ENCODE measurements at regions of chr18 and their contacts with region 1.

Region 1: DNA sequence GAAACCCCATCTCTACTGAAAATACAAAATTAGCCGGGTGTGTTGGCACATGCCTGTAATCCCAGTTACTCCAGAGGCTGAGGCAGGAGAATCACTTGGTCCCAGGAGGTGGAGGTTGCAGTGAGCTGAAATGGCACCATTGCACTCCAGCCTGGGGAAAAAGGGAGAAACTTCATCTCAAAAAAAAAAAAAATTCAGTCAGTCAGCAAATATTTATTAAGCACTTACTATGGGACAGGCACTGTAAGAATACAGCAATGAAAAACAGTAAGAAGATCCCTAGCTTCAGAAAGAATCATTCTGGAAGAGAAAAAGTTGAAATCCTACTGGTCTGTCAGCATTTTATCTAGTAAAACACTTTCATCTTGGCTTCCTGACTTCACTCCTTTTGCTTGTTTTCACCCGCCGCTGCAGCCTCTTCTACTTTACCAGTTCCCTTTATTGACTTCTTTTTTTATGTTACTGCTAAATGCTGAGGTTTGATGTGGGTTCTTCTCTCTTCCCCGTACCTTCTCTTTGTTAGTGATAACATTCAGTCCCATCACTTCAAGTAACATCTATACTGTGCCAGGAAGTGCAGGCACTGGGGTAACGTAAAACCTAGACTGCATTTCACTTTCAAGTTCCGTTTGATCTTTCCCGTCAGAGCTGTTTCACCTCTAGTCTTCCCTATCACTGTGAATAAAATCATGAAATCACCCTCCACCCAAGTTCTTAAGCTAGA is 10.8 kb upstream of the TAF4B start:
- DNase-seq: peak in 8 of 9 donors; percentile 25 to 93 (median 87)
- ATAC-seq: peak; percentile 98
- H3K4me3 ChIP-seq: no peak overlapping the region
- H3K4me3 Mint-ChIP-seq: peak overlapping the region; percentile 29 to 82 (median 60)
- H3K27ac ChIP-seq: peak overlapping the region; percentile 58
- H3K27ac Mint-ChIP-seq: peak overlapping the region; percentile 80 to 98 (median 91)
- H3K4me1 ChIP-seq: peaks cover 11 to 18% of the 10 kb centered on the region in 2 donors
- H3K4me1 Mint-ChIP-seq: peaks cover 19 to 50% (median 30%) of the 10 kb centered on the region in 7 donors
- H3K27me3 ChIP-seq: no peaks in the 10 kb centered on the region
- H3K27me3 Mint-ChIP-seq: no peaks in the 10 kb centered on the region

Region 2: DNA sequence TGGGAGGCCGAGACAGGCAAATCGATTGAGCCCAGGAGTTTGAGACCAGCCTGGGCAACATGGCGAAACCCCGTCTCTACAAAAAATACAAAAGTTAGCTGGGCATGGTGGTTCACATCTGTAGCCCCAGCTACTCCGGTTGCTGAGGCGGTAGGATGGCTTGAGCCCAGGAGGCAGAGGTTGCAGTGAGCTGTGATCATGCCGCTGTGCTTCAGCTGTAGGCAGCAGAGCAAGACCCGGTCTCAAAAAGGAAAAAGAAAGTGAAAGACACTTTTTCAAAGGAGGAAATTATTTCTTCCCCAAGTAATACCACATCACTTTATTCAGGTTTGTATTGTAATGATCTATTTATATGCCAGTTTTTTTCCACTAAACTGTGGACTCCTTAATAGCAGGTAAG is 24.9 kb before region 1 on chr18:
- CTCF ChIA-PET with region 1: no interaction called
- POLR2A ChIA-PET with region 1: interaction called, 16 read pairs
- intact Hi-C with region 1: loop called (anchors 1 to 2 kb)
- DNase-seq: peak in 8 of 9 donors; percentile 22 to 61 (median 48)
- ATAC-seq: peak; percentile 85
- H3K4me3 ChIP-seq: peak overlapping the region; percentile 26
- H3K4me3 Mint-ChIP-seq: peak overlapping the region; percentile 74 to 88 (median 83)
- H3K27ac ChIP-seq: peak overlapping the region; percentile 63
- H3K27ac Mint-ChIP-seq: peak overlapping the region; percentile 87 to 93 (median 92)
- H3K4me1 ChIP-seq: no peaks in the 10 kb centered on the region
- H3K4me1 Mint-ChIP-seq: peaks cover 5 to 34% (median 28%) of the 10 kb centered on the region in 7 donors
- H3K27me3 ChIP-seq: no peaks in the 10 kb centered on the region
- H3K27me3 Mint-ChIP-seq: no peaks in the 10 kb centered on the region

Region 3: DNA sequence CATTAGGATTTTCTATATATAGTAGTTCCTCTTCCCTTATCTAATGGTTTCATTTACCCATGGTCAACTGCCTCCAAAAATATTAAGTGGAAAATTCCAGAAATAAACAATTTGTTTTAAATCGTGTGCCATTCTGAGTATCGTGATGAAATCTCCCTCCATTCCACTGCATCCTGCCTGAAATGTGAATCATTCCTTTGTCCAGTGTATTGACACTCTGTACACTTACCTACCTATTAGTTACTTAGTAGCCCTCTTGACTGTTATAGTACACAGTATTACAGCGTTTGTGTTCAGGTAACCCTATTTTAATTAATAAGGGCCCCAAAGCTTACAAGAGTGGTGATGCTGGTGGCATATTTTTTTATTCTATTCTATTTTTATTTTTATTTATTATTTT is 37.0 kb after region 1 on chr18:
- CTCF ChIA-PET with region 1: no interaction called
- POLR2A ChIA-PET with region 1: no interaction called
- intact Hi-C with region 1: loop called in 1 of 2 experiments (anchors 5 kb)
- DNase-seq: no peak
- ATAC-seq: no peak
- H3K4me3 ChIP-seq: no peak overlapping the region
- H3K4me3 Mint-ChIP-seq: no peak overlapping the region
- H3K27ac ChIP-seq: no peak overlapping the region
- H3K27ac Mint-ChIP-seq: no peak overlapping the region
- H3K4me1 ChIP-seq: no peaks in the 10 kb centered on the region
- H3K4me1 Mint-ChIP-seq: peaks cover 11 to 46% (median 36%) of the 10 kb centered on the region in 7 donors
- H3K27me3 ChIP-seq: no peaks in the 10 kb centered on the region
- H3K27me3 Mint-ChIP-seq: no peaks in the 10 kb centered on the region

Region 4: DNA sequence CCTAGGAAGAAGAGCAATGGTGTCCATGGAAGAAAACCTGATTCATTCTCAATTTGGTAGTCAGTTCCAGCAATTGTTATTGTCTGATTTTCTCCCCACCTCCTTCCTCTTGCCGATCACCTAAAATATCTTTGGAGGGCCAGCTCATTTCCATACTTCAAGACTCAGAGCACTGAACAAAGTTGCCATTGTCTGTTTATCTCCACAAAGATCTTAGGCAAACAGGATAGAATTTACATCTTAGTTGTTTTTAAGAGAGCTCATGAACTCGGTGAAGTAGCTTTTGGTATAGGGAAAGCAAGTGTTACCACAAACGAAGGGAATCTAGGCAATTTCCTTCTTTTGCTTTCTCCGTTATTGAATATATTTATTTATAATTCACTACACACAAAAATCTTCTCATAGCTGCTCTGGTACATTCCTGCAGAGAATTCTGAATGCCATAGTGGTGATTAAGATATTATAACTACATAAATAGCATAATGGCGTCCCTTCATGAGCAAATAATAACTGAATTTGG is 1011.2 kb after region 1 on chr18:
- CTCF ChIA-PET with region 1: no interaction called
- POLR2A ChIA-PET with region 1: no interaction called
- intact Hi-C with region 1: no loop called
- DNase-seq: no peak
- ATAC-seq: no peak
- H3K4me3 ChIP-seq: no peak overlapping the region
- H3K4me3 Mint-ChIP-seq: no peak overlapping the region
- H3K27ac ChIP-seq: no peak overlapping the region
- H3K27ac Mint-ChIP-seq: no peak overlapping the region
- H3K4me1 ChIP-seq: no peaks in the 10 kb centered on the region
- H3K4me1 Mint-ChIP-seq: no peaks in the 10 kb centered on the region
- H3K27me3 ChIP-seq: no peaks in the 10 kb centered on the region
- H3K27me3 Mint-ChIP-seq: no peaks in the 10 kb centered on the region